A673 (cell line): ENCODE measurements at regions of chr17 and their contacts with region 1.

Region 1: DNA sequence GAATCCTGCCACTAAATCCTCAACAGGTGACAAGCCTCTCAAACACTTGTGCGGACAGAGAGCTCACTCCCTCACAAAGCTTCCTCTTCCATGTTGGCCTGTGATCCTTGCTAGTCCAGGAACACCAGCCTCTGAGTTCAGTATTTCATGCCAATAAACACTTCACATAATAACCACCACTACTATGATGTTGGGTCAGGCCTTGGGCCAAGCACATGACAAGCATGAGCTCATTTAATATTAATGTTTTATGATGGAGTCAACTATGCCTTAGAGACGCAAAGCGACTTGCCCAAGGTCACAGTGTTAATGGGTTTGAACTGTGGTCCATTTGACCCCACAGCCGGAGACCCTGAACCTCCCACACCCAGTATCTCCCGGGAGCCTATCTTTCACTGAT is 129.1 kb downstream of the GAS7 start:
- DNase-seq: no peak
- H3K4me3 ChIP-seq: no peak overlapping the region
- H3K27ac ChIP-seq: no peak overlapping the region
- H3K4me1 ChIP-seq: no peaks in the 10 kb centered on the region
- H3K27me3 ChIP-seq: no peaks in the 10 kb centered on the region
- CTCF ChIP-seq: no peak

Region 2: GRCh38 chr17:9606453-9606852 is 462.8 kb before region 1 on chr17:
- CTCF ChIA-PET with region 1: no interaction called
- POLR2A ChIA-PET with region 1: no interaction called
- intact Hi-C with region 1: no loop called
- DNase-seq: no peak
- H3K4me3 ChIP-seq: no peak overlapping the region
- H3K27ac ChIP-seq: no peak overlapping the region
- H3K4me1 ChIP-seq: no peaks in the 10 kb centered on the region
- H3K27me3 ChIP-seq: no peaks in the 10 kb centered on the region
- CTCF ChIP-seq: no peak

Region 3: DNA sequence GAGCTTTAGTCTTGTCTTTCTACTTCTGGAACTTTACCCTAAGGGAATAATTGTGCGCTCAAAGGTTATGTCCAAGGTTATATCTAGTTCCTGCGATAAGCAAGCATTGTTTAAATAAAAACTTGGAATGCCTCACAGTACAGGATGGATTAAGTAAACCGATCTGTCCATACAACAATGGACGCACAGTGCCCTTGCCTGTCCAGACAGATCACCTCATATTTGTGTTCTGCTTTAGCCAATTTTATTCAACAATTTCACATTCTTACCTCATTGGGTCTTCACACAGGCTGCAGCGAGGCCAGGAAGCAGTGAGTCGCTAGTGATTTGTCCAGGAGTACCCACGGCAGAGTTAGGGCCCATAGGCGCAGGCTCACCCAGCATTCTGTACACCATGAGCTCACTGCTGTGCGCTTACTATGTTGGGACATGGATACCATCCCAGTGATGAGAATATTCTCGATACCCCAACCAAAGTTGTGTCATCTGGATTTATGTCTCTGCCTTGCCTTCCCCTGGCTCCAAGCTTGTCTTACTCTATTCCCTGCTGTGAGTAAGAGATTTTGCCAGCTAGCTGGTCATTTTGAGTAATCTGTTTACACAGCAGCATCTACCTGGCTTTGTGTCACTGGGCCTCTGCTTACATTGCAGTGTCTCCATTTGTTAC is 384.2 kb before region 1 on chr17:
- CTCF ChIA-PET with region 1: no interaction called
- POLR2A ChIA-PET with region 1: interaction called, 14 read pairs
- intact Hi-C with region 1: no loop called
- DNase-seq: no peak
- H3K4me3 ChIP-seq: no peak overlapping the region
- H3K27ac ChIP-seq: no peak overlapping the region
- H3K4me1 ChIP-seq: no peaks in the 10 kb centered on the region
- H3K27me3 ChIP-seq: no peaks in the 10 kb centered on the region
- CTCF ChIP-seq: no peak

Region 4: GRCh38 chr17:10119203-10120108 is 50.2 kb after region 1 on chr17:
- CTCF ChIA-PET with region 1: no interaction called
- POLR2A ChIA-PET with region 1: no interaction called
- intact Hi-C with region 1: no loop called
- DNase-seq: peak; percentile 54
- H3K4me3 ChIP-seq: no peak overlapping the region
- H3K27ac ChIP-seq: peak overlapping the region; percentile 60
- H3K4me1 ChIP-seq: peaks cover 48% of the 10 kb centered on the region
- H3K27me3 ChIP-seq: no peaks in the 10 kb centered on the region
- CTCF ChIP-seq: no peak

Region 5: GRCh38 chr17:10984220-10984619 is 914.9 kb after region 1 on chr17:
- CTCF ChIA-PET with region 1: no interaction called
- POLR2A ChIA-PET with region 1: interaction called, 13 read pairs
- intact Hi-C with region 1: no loop called
- DNase-seq: no peak
- H3K4me3 ChIP-seq: no peak overlapping the region
- H3K27ac ChIP-seq: no peak overlapping the region
- H3K4me1 ChIP-seq: no peaks in the 10 kb centered on the region
- H3K27me3 ChIP-seq: peaks cover 6% of the 10 kb centered on the region
- CTCF ChIP-seq: no peak